ENCODE measurements at regions of chr16 and their contacts with region 1.

Region 1: DNA sequence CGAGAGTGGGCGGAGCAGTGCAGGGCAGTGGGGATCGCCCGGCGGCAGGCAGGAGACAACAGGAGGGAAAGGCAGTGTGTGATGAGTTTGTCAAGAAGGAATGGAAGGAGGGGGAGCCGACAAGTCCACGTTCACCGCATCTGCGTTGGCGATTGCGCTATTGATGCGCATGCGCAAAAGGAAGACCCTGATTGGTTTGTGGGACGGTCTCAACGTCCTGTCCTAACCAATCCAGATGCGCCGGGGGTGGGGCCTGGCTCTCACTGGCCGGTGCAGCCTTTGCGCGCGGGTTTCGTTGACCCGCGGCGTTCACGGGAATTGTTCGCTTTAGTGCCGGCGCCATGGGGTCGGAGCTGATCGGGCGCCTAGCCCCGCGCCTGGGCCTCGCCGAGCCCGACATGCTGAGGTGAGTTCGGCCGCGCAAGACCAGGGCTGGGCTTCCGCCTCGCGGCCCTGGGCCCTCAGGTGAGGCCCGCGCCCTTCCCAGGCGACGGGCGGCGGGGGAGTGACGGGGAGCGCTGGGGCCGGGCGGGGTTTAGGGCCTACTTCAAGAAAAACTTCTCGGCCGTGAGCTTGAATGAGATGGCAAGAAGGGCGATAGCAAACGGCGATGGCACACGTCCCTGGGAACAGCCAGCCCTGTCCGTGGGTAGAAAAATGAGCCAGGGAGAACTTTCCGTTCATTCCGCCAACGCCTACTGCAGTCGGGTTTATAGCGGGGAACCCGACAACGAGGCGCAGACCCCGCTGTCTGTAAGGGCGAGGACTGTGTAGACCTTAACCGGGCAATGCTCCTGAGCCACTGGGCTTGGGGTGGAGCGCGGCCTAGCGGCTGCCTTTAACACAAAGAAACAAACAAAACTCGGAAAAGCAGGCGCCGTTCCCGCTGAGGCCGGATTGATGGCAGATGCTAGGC is at the start of gene ORC6:
- DNase-seq: peak; percentile 63
- H3K4me3 ChIP-seq: peak within 1 kb of the TSS; percentile 89
- CTCF ChIP-seq: peak; percentile 62

Region 2: DNA sequence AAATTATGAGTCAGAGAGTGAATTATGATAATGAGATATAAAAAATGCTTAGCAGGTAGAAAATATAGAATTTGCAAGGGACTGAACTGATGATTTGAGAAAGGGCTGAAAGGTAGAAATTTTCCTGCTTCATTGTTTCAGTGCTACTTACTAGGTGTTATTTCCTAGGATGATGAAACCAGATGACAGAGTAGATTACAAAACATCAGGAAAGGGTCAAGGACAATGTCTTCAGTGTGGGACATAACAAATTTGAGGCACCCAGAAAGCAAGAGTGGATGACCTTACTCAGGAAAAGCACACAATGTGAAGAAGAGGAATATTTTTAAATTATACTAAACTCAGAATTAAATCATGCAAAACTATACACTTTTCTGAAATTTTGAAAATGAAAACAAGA is 170.6 kb before region 1 on chr16:
- CTCF ChIA-PET with region 1: no interaction called
- POLR2A ChIA-PET with region 1: no interaction called
- DNase-seq: no peak
- H3K4me3 ChIP-seq: no peak overlapping the region
- CTCF ChIP-seq: no peak

Region 3: GRCh38 chr16:46629331-46630219 is 60.0 kb before region 1 on chr16:
- CTCF ChIA-PET with region 1: interaction called, 16 read pairs
- POLR2A ChIA-PET with region 1: no interaction called
- DNase-seq: no peak
- H3K4me3 ChIP-seq: no peak overlapping the region
- CTCF ChIP-seq: peak; percentile 33

Region 4: GRCh38 chr16:46712911-46713310 is 23.3 kb after region 1 on chr16:
- CTCF ChIA-PET with region 1: no interaction called
- POLR2A ChIA-PET with region 1: no interaction called
- DNase-seq: no peak
- H3K4me3 ChIP-seq: no peak overlapping the region
- CTCF ChIP-seq: no peak

Region 5: GRCh38 chr16:46736695-46737094 is 47.1 kb after region 1 on chr16:
- CTCF ChIA-PET with region 1: no interaction called
- POLR2A ChIA-PET with region 1: no interaction called
- DNase-seq: no peak
- H3K4me3 ChIP-seq: no peak overlapping the region
- CTCF ChIP-seq: no peak